ENCODE measurements at regions of chr12 and their contacts with region 1.

Region 1: DNA sequence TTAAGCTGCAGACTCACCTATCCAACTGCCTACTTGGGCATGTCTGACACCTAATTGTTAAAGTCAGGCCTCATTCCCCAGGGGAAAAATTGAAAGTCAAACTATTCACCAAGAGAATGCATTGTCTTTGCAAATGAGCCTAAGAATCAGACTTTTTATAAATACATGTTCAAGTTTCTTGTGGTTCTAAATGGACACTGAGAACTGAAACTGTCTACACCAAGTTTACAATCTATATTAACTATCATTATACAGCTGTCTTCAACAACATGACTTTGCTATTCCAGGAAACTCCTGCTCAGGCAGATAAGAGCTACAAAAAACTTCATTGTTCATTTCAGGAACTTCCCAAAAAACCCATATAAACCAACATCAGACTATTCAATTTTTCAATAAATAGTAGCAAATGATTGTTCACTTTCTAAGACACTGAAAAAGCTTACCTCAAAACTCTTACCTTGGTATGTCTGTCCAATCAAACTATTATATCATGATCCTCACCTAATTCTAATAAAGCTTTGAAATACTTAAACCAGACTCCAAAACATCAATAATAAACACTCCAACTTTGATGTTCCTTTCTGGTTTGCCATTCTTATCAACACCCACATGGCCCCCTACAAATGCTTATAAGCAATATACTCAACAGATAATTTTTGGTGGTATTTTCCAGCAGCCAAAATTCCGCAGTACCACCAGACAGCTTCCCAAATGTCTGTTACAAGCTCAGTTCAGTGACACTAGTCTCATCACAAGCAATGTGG is 24.2 kb downstream of the CDK17 start:
- DNase-seq: no peak
- H3K4me3 Mint-ChIP-seq: no peak overlapping the region
- H3K27ac Mint-ChIP-seq: peak overlapping the region; percentile 96
- H3K4me1 Mint-ChIP-seq: peaks cover 75% of the 10 kb centered on the region
- H3K27me3 Mint-ChIP-seq: no peaks in the 10 kb centered on the region

Region 2: GRCh38 chr12:96335270-96335669 is 40.8 kb before region 1 on chr12:
- CTCF ChIA-PET with region 1: no interaction called
- POLR2A ChIA-PET with region 1: no interaction called
- intact Hi-C with region 1: loop called (anchors 5 kb)
- DNase-seq: no peak
- H3K4me3 Mint-ChIP-seq: no peak overlapping the region
- H3K27ac Mint-ChIP-seq: peak overlapping the region; percentile 54
- H3K4me1 Mint-ChIP-seq: peaks cover 41% of the 10 kb centered on the region
- H3K27me3 Mint-ChIP-seq: no peaks in the 10 kb centered on the region

Region 3: GRCh38 chr12:96350982-96351381 is 25.0 kb before region 1 on chr12:
- CTCF ChIA-PET with region 1: no interaction called
- POLR2A ChIA-PET with region 1: no interaction called
- intact Hi-C with region 1: loop called (anchors 2 kb)
- DNase-seq: no peak
- H3K4me3 Mint-ChIP-seq: no peak overlapping the region
- H3K27ac Mint-ChIP-seq: no peak overlapping the region
- H3K4me1 Mint-ChIP-seq: peaks cover 71% of the 10 kb centered on the region
- H3K27me3 Mint-ChIP-seq: no peaks in the 10 kb centered on the region

Region 4: DNA sequence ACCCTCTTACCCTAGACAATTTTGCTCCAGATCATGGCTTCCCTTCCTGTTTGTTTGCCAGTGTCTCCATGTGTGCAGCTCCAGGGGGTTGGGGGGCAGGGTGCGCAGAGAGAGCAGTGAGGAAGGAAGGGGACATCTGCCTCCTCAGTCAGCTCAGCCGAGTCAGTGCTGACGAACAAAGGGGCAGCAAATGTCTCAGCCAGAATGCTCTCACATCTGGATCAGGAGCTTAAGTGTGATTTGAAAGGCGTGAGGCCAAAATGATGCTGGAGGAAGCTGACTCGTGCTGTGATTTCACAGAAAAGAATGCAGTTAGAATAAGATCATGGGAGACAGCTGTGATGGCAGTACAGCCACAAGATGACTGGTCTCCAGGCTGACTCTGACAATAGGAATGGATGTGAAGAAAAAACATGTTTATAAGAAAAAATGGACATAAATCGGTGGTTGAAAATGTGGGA is 51.3 kb after region 1 on chr12:
- CTCF ChIA-PET with region 1: no interaction called
- POLR2A ChIA-PET with region 1: no interaction called
- intact Hi-C with region 1: loop called (anchors 1 kb)
- DNase-seq: peak; percentile 76
- H3K4me3 Mint-ChIP-seq: peak overlapping the region; percentile 17
- H3K27ac Mint-ChIP-seq: peak overlapping the region; percentile 79
- H3K4me1 Mint-ChIP-seq: peaks cover 47% of the 10 kb centered on the region
- H3K27me3 Mint-ChIP-seq: no peaks in the 10 kb centered on the region

Region 5: GRCh38 chr12:96438330-96438729 is 62.3 kb after region 1 on chr12:
- CTCF ChIA-PET with region 1: no interaction called
- POLR2A ChIA-PET with region 1: no interaction called
- intact Hi-C with region 1: no loop called
- DNase-seq: no peak
- H3K4me3 Mint-ChIP-seq: no peak overlapping the region
- H3K27ac Mint-ChIP-seq: no peak overlapping the region
- H3K4me1 Mint-ChIP-seq: peaks cover 32% of the 10 kb centered on the region
- H3K27me3 Mint-ChIP-seq: no peaks in the 10 kb centered on the region